ENCODE measurements at regions of chr5 and their contacts with region 1.

Region 1: GRCh38 chr5:96702503-96703383 is 40.6 kb downstream of the CAST start:
- DNase-seq: peak; percentile 74
- CTCF ChIP-seq: no peak

Region 2: DNA sequence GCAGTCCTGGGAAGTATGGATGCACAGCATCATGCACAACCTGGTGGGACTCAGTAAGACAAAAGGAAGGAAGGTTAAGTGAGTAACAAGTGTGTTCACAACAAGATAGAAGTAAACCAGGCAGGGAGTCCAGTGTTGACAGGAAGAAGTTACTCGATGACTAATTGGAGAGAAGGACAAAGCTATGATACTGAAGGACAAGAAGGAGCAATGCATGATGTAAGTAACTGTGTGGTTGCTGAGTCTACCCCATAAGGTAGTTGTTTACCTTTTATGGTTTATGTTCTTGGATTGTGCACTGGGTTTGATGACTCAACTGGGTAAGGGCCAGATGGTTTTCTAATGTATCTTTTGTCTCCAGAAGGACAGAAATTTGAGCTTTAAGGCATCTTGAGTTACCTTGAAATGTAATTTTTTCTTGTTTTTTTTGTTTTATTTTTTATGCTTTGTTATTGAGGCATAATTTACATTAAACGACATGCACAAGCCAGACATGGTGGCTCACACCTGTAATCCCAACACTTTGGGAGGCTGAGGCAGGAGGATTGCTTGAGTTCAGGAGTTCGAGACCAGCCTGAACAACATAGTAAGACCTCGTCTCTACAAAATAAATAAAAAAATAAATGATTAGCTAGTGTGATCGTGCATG is 129.8 kb before region 1 on chr5:
- CTCF ChIA-PET with region 1: no interaction called
- POLR2A ChIA-PET with region 1: no interaction called
- DNase-seq: no peak
- CTCF ChIP-seq: no peak

Region 3: DNA sequence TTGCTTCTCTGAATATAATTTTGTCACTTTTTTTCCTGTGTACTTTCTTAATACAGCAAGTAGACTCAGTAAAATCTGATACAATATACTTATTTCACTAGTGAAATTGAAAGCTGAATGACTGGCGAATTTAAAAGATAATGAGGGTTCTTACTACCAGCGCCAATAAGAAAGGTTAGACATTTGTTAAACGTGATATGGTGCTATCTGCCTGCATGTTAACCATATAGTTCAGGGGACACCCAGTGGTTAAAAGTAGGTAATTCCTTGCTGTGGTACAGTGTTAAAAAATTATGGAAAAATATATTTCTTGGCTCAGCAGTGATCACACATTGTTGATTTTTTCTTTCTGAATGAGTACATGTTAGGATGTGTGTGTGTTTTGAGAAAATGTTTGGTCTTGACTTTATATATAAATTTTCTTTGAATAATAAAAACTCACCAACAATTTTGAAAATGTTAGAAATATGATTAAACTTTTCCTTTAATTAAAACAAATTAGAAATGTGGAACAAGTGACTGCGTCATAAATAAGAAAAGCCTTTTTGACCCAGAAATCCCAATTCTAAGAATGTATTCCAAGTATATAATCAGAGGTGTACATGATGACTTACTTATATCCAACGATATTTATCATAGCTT is 14.8 kb before region 1 on chr5:
- CTCF ChIA-PET with region 1: interaction called, 13 read pairs
- POLR2A ChIA-PET with region 1: no interaction called
- DNase-seq: peak; percentile 46
- CTCF ChIP-seq: peak; percentile 54

Region 4: GRCh38 chr5:96714951-96715451 is 12.3 kb after region 1 on chr5:
- CTCF ChIA-PET with region 1: interaction called, 16 read pairs
- POLR2A ChIA-PET with region 1: no interaction called
- DNase-seq: no peak
- CTCF ChIP-seq: no peak

Region 5: DNA sequence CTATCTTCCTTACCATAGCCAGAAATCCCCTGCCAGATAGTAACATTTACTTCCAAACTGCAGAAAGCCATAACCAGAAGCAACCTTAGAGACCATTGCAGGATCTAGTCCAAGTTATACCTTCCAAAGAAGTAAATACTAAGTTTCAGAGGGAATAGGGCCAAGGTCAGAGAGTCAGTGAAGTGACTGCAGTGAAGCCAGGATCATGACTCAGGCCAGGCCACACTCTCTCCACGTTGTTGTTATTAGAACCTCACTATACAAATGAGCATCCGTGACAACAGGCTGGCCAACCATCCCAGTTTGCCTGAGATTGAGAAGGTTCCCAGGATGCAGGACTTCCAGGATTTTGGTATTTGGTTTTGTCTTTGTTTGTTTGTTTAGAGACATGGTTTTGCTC is 93.7 kb after region 1 on chr5:
- CTCF ChIA-PET with region 1: no interaction called
- POLR2A ChIA-PET with region 1: no interaction called
- DNase-seq: no peak
- CTCF ChIP-seq: no peak

Measured in GM10248 (cell line).